Activated naive CD4-positive, alpha-beta T cell treated with anti-CD3 and anti-CD28 coated beads for 36 hours (primary cell): ENCODE measurements at regions of chr7 and their contacts with region 1.

Region 1: GRCh38 chr7:25894902-25895791 is 256.9 kb upstream of the NFE2L3 start:
- DNase-seq: peak; percentile 74
- H3K4me3 Mint-ChIP-seq: peak overlapping the region; percentile 6
- H3K27ac Mint-ChIP-seq: no peak overlapping the region
- H3K4me1 Mint-ChIP-seq: peaks cover 25% of the 10 kb centered on the region
- H3K27me3 Mint-ChIP-seq: peaks cover under 1% of the 10 kb centered on the region

Region 2: DNA sequence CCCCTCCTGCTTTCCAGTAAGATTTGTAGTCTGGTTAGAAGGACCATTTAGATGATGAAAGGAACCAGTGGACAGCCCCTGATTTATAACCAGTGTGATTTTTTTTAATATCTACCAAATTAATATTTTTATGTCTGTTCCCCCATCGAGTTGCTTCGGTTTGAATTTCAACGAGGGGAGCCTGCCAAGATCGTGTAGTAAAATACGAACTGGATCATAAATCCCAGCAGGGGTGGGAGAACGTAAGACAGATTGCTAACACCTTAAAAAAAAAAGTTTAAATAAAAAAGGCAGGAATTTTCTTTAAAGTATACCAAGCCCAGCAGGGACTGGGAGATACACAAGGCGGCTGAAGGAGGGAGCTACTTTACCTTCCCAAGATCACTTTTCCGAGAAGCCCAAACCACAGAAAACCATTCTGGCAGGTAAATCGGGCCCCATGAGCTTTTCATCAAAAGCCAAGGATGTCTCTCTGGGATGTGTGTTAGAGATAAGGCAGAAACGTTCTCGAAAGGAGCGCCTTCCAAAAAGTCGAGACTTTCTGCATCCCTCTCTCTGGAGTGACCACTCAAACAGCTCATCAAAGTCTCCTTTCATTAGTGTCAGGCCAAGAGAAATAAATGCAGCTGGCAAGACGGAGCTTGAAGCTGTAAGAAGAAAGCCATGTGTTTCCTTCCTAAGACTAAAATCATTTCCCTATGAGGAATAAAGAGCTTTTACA is 13.7 kb before region 1 on chr7:
- CTCF ChIA-PET with region 1: interaction called, 13 read pairs
- intact Hi-C with region 1: no loop called
- DNase-seq: no peak
- H3K4me3 Mint-ChIP-seq: no peak overlapping the region
- H3K27ac Mint-ChIP-seq: no peak overlapping the region
- H3K4me1 Mint-ChIP-seq: no peaks in the 10 kb centered on the region
- H3K27me3 Mint-ChIP-seq: peaks cover 18% of the 10 kb centered on the region

Region 3: GRCh38 chr7:25951031-25951948 is 56.1 kb after region 1 on chr7:
- CTCF ChIA-PET with region 1: interaction called, 3 read pairs
- intact Hi-C with region 1: loop called (anchors 1 kb)
- DNase-seq: peak; percentile 91
- H3K4me3 Mint-ChIP-seq: peak overlapping the region; percentile 88
- H3K27ac Mint-ChIP-seq: no peak overlapping the region
- H3K4me1 Mint-ChIP-seq: peaks cover 16% of the 10 kb centered on the region
- H3K27me3 Mint-ChIP-seq: peaks cover 7% of the 10 kb centered on the region

Region 4: DNA sequence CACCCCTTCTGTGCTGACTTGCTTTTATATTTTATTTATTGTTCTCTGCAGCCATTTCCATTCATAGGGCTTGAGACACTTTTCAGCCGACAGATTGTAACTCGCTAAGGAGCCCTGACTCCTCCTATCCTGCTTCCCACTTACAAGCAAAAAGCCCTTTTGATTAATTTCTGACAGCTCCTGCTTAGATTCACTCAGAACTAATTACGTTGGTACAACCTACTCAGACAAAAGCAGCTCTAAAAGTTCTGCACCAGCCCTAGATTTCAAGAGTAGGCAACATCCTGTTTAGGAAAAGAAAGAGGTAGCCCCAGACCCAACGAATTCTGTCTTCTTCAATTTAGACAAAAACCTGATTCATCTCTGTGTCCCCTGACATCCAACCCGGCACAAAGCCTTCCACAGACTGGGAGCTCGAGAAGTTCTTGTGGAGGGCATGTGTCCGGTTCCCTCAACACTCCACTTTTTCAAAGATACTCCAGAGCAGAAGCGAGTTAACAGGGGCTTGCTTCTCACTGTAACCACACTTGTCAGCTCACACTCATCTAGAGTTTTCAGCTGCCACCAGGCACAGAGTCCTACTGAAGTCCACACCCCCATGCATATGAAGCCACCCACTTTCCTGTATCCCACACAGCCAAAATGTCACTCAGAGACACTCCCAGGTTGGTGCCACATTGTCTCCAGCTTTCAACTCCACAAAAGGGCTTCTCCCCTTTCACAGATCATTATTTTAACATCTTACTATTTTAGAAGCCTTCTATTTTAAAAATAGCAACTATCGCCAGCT is 143.2 kb after region 1 on chr7:
- CTCF ChIA-PET with region 1: no interaction called
- intact Hi-C with region 1: no loop called
- DNase-seq: no peak
- H3K4me3 Mint-ChIP-seq: no peak overlapping the region
- H3K27ac Mint-ChIP-seq: no peak overlapping the region
- H3K4me1 Mint-ChIP-seq: peaks cover 9% of the 10 kb centered on the region
- H3K27me3 Mint-ChIP-seq: peaks cover 9% of the 10 kb centered on the region

Region 5: GRCh38 chr7:26090927-26091519 is 195.9 kb after region 1 on chr7:
- CTCF ChIA-PET with region 1: interaction called, 31 read pairs
- intact Hi-C with region 1: no loop called
- DNase-seq: peak; percentile 15
- H3K4me3 Mint-ChIP-seq: no peak overlapping the region
- H3K27ac Mint-ChIP-seq: no peak overlapping the region
- H3K4me1 Mint-ChIP-seq: peaks cover 19% of the 10 kb centered on the region
- H3K27me3 Mint-ChIP-seq: no peaks in the 10 kb centered on the region

Region 6: DNA sequence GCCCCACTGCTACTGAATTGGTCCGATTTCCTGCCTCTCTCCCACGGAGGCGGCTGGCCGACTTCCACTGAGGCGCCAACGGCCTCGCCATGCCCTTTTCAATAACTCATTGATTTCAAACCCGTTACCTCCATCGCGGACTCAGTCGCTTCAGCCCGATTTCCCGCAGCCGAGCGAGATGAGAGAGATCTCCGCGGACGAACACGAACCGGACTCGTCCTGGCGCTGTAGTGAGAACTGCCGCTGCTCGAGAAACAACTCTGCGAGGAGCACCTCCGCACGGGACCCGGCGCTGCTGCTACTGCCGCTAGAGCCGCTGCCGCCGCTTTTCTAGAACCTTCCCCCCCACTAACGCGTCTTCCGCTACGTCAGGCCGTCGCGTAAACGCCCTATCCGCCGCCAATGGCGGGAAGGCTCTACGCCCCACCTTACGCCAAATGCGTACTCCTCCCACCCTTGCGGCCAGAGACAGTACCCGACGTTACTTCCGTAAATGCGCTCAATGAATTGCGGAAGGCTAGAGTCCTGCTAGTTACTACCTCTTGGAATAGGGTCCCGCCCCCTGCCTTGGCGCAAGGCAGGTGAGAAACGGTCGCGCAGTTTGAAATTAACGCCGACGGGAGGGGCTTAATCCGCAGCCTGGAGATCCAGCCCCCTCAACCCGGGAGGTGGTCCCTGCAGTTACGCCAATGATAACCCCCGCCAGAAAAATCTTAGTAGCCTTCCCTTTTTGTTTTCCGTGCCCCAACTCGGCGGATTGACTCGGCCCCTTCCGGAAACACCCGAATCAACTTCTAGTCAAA is 305.5 kb after region 1 on chr7 and contains the start of gene HNRNPA2B1:
- CTCF ChIA-PET with region 1: interaction called, 3 read pairs
- intact Hi-C with region 1: loop called (anchors 5 kb)
- DNase-seq: peak; percentile 98
- H3K4me3 Mint-ChIP-seq: peak within 1 kb of the TSS; percentile 100
- H3K27ac Mint-ChIP-seq: peak within 1 kb of the TSS; percentile 100
- H3K4me1 Mint-ChIP-seq: peaks cover 38% of the 10 kb centered on the region
- H3K27me3 Mint-ChIP-seq: no peaks in the 10 kb centered on the region
- total RNA-seq, gene HNRNPA2B1: 925 to 950 TPM

Region 7: DNA sequence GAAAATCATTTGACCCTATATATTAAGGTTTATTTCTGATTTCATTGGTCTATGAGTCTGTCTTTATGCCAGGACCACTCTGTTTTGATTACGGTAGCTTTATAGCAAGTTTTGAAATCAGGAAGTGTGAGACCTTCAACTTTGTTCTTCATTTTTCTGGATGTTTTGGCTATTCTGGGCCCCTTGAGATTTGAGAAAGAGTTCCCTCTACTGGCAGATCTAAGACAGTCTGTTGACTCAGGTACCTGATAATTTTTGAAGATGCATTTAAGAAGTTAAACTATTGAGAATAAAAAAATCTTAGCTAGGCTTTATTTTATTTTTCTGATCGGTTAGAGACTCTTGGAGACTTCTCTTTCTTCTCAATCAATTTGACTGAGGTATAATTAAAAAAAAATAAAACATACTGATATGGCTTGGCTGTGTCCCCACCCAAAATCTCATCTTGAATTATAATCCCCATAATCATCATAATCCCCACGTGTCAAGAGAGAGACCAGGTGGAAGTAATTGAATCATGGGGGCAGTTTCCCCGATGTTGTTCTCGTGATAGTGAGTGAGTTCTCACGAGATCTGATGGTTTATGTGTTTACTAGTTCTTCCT is 605.7 kb after region 1 on chr7:
- CTCF ChIA-PET with region 1: no interaction called
- intact Hi-C with region 1: loop called (anchors 1 kb)
- DNase-seq: no peak
- H3K4me3 Mint-ChIP-seq: no peak overlapping the region
- H3K27ac Mint-ChIP-seq: no peak overlapping the region
- H3K4me1 Mint-ChIP-seq: no peaks in the 10 kb centered on the region
- H3K27me3 Mint-ChIP-seq: peaks cover 3% of the 10 kb centered on the region